ENCODE measurements at regions of chr1 and their contacts with region 1.

Region 1: DNA sequence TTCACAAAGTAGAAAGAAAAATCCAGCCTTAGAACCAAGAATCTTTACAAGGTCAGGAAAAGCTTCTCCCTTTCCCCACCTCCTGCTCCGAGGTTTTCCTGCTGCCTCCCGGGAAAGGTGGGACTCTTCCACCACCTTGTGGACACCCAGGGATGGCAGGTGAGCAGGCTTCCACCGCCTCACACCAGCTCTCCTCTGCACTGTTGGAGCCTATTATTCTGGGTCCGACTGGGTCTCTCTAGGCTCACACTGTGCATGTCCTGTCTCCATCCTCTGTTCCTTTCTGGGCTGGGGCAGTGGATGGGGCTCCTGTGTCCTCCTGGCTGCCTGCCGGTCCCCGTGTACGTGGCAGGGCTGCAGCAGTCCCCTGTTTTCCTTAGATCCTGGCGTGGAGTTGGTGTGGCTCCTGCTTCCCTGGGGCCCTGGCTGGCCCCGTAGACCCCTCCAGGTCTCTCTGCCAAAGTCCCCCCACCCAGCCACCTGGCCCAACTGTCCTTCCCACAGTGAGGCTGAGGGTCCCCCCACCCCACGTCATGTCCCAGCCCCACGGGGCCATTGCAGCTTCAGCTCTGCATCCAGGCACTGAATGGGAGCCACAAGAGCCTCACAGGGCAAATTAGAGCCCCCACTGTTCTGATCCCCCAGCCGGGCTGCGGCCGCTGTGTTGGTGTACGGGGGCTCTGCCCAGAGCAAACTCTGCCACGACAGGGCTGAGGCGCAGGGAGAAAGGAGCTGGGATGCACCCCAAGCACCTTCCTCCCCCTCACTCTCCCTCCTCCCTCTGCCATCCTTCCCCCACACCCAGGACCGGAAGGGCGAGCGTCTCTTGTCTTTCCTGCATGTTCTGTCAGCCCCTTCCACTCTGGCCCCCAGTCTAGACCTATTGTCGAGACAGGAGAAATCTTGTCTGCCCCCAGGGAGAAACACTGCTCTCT is 3.3 kb upstream of the SLC45A1 start:
- DNase-seq: peak; percentile 93
- H3K27ac ChIP-seq: peak overlapping the region; percentile 5; the same call in 1 of the 2 replicates
- CTCF ChIP-seq: peak; percentile 88

Region 2: GRCh38 chr1:7975212-7975865 is 339.3 kb before region 1 on chr1:
- CTCF ChIA-PET with region 1: interaction called, 51 read pairs
- POLR2A ChIA-PET with region 1: no interaction called
- DNase-seq: peak; percentile 85
- H3K27ac ChIP-seq: peak overlapping the region; percentile 57
- CTCF ChIP-seq: peak; percentile 92

Region 3: DNA sequence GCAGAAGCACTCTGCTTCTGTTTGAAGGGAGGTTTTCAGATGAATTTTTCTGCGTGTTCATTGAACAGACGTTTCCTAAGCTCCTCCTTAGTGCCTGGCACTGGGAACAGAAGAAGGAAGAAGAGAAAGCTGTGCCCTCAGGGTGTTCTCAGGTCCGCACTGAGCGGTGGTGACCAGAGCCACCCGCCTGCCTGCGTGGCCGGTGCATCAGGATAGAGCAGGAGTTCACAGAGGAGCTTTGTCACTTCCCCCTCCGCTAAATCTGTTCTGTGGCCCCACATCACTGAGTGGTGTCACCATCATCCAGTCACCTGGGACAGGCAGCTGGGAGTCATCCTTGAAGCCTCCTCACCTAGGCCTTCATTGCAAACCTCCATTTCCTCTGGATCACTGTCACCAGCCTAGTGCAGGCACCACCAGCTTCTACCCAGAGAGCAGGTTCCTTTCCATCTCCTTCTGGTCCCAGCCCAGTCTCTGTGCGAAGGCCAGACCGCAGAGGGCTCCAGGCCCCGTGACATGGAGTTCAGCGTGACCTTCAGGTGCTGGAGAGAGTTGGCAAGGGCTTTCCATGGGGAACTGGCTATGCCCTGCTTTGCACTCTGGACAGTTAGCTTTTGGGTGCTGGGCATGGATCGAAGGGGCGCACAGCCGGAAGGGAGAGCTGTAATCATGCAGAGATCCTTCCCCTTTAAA is 331.4 kb before region 1 on chr1:
- CTCF ChIA-PET with region 1: interaction called, 17 read pairs
- POLR2A ChIA-PET with region 1: no interaction called
- DNase-seq: no peak
- H3K27ac ChIP-seq: peak overlapping the region; percentile 37
- CTCF ChIP-seq: no peak

Region 4: DNA sequence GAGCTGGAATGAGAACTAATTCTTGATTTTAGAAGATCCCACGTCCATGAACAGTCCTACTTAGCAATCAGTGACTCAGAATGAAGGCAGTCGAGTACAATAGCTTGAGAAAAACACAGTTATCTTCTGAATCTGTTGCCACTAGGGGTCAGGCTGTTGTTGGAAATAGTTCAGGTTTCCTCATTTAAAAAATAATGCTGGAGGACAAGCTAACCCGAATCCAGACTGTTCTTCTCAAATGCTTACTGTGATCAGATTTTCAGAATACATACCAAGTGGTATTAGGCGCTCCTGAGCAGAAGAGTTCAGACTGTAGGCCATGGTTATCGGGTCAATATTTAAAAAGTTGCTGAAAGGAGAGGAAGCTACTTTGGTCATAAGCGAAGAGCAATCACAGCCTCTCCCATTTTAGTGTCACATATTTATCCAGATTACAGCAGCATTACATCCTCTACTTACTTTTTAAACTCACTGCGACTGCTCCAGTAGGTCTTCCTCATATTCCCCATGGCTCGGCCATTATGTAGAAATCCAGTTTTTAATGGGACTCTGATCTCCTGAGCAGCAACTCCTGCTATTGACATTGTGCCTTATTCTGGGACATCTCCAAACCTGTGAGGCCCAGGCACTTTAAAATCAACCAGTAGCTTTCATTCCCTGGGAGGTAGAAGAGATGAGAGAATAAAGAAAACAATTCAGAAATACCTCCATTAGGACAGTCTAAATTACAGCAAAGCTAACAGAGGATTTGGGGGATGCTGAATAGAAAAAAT is 299.4 kb before region 1 on chr1:
- CTCF ChIA-PET with region 1: interaction called, 29 read pairs
- POLR2A ChIA-PET with region 1: no interaction called
- DNase-seq: peak; percentile 58
- H3K27ac ChIP-seq: no peak overlapping the region
- CTCF ChIP-seq: peak; percentile 69

Region 5: GRCh38 chr1:8031176-8031785 is 283.3 kb before region 1 on chr1:
- CTCF ChIA-PET with region 1: interaction called, 11 read pairs
- POLR2A ChIA-PET with region 1: no interaction called
- DNase-seq: no peak
- H3K27ac ChIP-seq: no peak overlapping the region
- CTCF ChIP-seq: peak; percentile 83

Region 6: DNA sequence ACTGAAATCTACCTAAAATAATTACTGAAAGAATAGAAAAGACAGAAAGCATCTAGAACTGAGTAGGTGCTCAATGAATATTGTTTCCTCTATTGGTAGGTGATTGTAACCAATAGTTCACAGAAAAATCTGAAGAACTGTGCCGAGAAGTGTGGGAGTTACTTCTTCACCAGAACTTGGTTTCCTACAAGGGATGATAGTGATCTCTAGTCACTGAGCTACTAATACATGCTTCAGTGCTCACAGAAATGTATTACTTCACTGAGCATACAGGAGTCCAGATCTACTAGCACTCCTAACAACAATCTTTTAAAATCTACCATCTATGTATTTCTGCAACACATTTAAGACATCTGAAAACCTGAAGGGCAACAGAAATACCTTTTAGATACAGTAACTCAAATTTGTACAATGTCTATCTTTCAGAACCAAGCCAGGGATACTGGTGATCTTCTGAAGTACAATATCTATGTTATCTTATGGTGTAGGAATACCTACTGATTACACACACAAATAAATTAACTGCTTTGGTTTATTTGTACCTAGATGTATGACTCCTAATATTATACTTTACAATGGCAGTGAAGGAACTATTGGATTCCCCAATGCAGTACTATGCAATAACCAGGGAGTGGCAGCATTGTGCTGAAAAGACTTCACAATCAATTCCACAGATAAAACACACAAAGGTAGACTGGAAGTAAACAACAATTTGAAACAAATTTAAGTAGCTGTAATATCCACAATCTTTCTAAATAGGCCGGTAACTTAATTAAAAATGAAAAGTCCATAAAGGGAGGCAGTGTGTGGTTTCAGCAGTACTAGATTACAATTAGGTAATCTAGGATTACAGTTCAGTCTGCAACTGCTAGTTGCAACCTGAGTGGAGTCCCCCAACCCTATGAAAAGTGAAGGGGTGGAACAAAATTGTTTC is 246.3 kb after region 1 on chr1:
- CTCF ChIA-PET with region 1: no interaction called
- POLR2A ChIA-PET with region 1: no interaction called
- DNase-seq: peak; percentile 41
- H3K27ac ChIP-seq: no peak overlapping the region
- CTCF ChIP-seq: peak; percentile 93

Region 7: GRCh38 chr1:8649027-8649426 is 334.4 kb after region 1 on chr1:
- CTCF ChIA-PET with region 1: no interaction called
- POLR2A ChIA-PET with region 1: no interaction called
- DNase-seq: no peak
- H3K27ac ChIP-seq: no peak overlapping the region
- CTCF ChIP-seq: no peak

Measured in RWPE1 (cell line).